Naive thymus-derived CD4-positive, alpha-beta T cell (primary cell): ENCODE measurements at regions of chrX and their contacts with region 1.

Region 1: DNA sequence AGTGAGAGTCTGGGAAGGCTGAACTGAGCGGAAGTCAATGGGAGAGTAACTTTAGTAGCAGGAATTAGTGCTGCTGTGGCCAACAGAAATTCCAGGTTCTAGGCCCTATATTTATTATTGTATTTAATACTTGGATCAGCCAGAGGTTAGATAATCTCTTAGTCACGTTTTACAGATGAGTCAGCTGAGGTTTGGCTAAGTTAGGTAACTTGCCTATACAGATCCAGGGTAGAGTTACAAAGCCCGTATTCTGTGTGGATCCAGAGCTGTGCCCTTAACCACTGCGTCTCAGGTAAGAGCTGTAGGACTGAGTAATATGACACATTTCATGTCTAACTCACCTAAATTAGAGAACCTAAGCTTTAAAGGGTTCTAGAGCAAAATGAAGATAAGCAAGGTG is 20.5 kb downstream of the PSMD10 start:
- DNase-seq: no peak
- ATAC-seq: no peak
- H3K4me3 ChIP-seq: no peak overlapping the region
- H3K4me3 Mint-ChIP-seq: no peak overlapping the region
- H3K27ac ChIP-seq: no peak overlapping the region
- H3K27ac Mint-ChIP-seq: peak overlapping the region in 4 of 9 donors; percentile 22 to 78 (median 36)
- H3K4me1 ChIP-seq: no peaks in the 10 kb centered on the region
- H3K4me1 Mint-ChIP-seq: peaks cover 0 to 11% (median 1%) of the 10 kb centered on the region in 7 donors
- H3K27me3 ChIP-seq: no peaks in the 10 kb centered on the region
- H3K27me3 Mint-ChIP-seq: peaks cover 0 to 7% (median 0%) of the 10 kb centered on the region in 5 donors

Region 2: GRCh38 chrX:106874075-106874474 is 1196.8 kb before region 1 on chrX:
- CTCF ChIA-PET with region 1: no interaction called
- POLR2A ChIA-PET with region 1: no interaction called
- intact Hi-C with region 1: loop called in 1 of 2 experiments (anchors 5 kb)
- DNase-seq: peak in 4 of 9 donors; percentile 14 to 22 (median 21)
- ATAC-seq: no peak
- H3K4me3 ChIP-seq: no peak overlapping the region
- H3K4me3 Mint-ChIP-seq: no peak overlapping the region
- H3K27ac ChIP-seq: no peak overlapping the region
- H3K27ac Mint-ChIP-seq: no peak overlapping the region
- H3K4me1 ChIP-seq: no peaks in the 10 kb centered on the region
- H3K4me1 Mint-ChIP-seq: no peaks in the 10 kb centered on the region
- H3K27me3 ChIP-seq: no peaks in the 10 kb centered on the region
- H3K27me3 Mint-ChIP-seq: peaks cover 0 to 9% (median 3%) of the 10 kb centered on the region in 5 donors

Region 3: GRCh38 chrX:106999002-106999975 is 1071.6 kb before region 1 on chrX:
- CTCF ChIA-PET with region 1: no interaction called
- POLR2A ChIA-PET with region 1: no interaction called
- intact Hi-C with region 1: loop called in 1 of 2 experiments (anchors 10 kb)
- DNase-seq: peak; percentile 6 to 63 (median 49)
- ATAC-seq: peak; percentile 72
- H3K4me3 ChIP-seq: peak overlapping the region; percentile 53
- H3K4me3 Mint-ChIP-seq: peak overlapping the region; percentile 75 to 94 (median 86)
- H3K27ac ChIP-seq: peak overlapping the region; percentile 41
- H3K27ac Mint-ChIP-seq: peak overlapping the region in 8 of 9 donors; percentile 57 to 87 (median 71)
- H3K4me1 ChIP-seq: peaks cover 0 to 5% of the 10 kb centered on the region in 2 donors
- H3K4me1 Mint-ChIP-seq: peaks cover 5 to 13% (median 12%) of the 10 kb centered on the region in 7 donors
- H3K27me3 ChIP-seq: no peaks in the 10 kb centered on the region
- H3K27me3 Mint-ChIP-seq: peaks cover 0 to 2% (median 0%) of the 10 kb centered on the region in 5 donors

Region 4: DNA sequence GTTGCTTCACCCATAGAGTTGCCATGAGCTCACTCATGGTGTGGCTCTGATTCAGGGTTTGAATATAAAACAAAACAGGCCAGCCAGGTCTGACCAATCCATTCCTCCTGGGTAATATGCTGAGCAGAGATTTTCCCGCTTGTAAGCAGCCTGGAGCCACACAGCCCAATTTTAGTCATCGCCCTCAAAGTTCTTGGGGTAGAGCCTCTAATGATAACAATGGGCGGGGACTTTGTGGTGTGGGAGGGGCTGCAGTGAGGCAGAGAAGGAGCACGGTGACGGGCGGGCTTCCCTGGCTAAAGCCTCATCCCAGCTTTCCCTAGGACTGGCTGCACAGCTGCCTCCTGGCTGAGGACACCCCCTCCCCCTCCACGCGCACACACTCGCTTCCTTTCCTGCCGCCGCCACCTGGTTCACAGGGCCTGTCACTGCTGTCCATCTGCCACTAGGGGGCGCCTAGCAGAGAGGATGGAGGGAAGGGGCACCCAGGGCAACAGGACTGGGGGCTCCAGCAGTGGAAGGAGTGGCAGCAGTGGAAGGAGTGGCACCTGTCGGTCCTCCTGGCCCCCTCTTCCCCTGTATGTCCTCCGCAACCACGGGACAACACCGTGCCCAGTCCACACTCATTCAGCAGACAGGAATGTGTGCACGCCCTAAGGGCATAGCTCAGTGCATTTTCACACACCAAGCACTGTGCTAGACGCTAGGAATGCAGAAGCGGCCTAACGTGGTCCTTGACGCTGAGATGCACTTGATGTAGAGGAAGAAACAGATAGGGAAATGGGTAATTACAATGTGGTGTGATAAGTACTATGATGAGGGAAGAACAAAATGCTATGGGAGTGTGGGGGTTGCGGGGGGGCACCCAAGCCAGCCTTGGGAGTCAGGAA is 415.8 kb before region 1 on chrX:
- CTCF ChIA-PET with region 1: interaction called, 3 read pairs
- POLR2A ChIA-PET with region 1: no interaction called
- intact Hi-C with region 1: loop called (anchors 1 to 5 kb)
- DNase-seq: peak; percentile 49 to 76 (median 60)
- ATAC-seq: peak; percentile 94
- H3K4me3 ChIP-seq: no peak overlapping the region
- H3K4me3 Mint-ChIP-seq: no peak overlapping the region
- H3K27ac ChIP-seq: no peak overlapping the region
- H3K27ac Mint-ChIP-seq: peak overlapping the region in 7 of 9 donors; percentile 1 to 89 (median 72)
- H3K4me1 ChIP-seq: peaks cover 0 to 6% of the 10 kb centered on the region in 2 donors
- H3K4me1 Mint-ChIP-seq: peaks cover 6 to 30% (median 18%) of the 10 kb centered on the region in 7 donors
- H3K27me3 ChIP-seq: no peaks in the 10 kb centered on the region
- H3K27me3 Mint-ChIP-seq: no peaks in the 10 kb centered on the region

Region 5: DNA sequence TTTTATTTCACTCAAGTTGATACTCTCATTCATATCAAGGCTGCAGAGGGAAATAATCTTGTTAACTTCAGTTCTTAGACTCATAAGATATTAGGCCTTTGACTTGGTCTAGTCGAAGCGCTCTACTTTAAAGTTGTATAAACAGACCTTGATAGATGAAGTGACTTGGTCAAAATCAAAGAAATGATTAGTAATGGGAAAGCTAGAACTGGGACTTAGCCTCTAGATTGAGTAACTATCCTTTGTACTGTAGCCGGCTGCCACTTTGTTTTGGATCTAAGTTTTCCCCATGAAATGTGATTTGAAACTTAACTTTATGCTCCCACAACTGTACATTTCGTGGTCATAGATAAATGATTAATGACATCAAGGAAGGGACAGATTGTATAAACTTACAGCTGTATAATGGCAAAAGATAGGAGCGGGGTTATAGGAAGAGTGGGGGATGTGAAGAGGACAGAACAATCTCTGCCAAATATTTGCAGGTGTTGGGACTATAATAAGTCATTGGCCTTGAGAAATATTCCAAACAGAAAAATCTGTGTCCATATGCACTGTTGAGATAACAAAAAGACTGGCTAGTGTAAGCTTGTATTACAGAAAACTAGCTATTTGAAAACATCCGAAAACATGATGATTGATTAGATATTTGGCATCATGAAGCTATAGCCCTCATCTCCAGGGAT is 228.0 kb before region 1 on chrX:
- CTCF ChIA-PET with region 1: no interaction called
- POLR2A ChIA-PET with region 1: no interaction called
- intact Hi-C with region 1: loop called in 1 of 2 experiments (anchors 5 kb)
- DNase-seq: no peak
- ATAC-seq: no peak
- H3K4me3 ChIP-seq: no peak overlapping the region
- H3K4me3 Mint-ChIP-seq: no peak overlapping the region
- H3K27ac ChIP-seq: no peak overlapping the region
- H3K27ac Mint-ChIP-seq: no peak overlapping the region
- H3K4me1 ChIP-seq: no peaks in the 10 kb centered on the region
- H3K4me1 Mint-ChIP-seq: peaks cover 0 to 20% (median 7%) of the 10 kb centered on the region in 7 donors
- H3K27me3 ChIP-seq: no peaks in the 10 kb centered on the region
- H3K27me3 Mint-ChIP-seq: no peaks in the 10 kb centered on the region

Region 6: DNA sequence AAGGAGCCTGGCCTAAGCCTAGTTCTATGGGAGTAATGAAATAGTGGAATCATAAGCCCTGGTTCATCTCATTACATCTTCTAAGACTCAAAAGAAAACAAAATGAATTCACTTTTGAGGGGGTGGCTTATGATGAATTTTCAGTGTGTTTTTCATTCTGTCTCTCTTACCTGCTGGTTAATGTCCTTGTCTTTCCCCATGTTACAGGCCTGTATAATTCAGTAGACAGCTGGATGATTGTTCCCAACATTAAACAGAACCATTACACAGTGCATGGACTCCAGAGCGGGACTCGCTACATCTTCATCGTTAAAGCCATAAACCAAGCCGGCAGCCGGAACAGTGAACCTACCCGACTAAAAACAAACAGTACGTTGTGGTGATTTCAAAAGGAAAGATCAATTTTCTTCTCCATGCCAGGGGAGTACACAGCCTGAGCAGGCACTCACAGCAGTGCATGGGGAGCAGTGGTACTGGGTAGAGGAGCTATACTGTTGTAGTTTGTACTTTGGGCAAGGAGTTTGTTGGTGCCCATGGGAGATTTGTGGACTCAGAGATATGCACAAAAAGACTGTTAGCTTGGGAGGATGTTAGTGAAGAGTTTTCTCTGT is 146.7 kb before region 1 on chrX:
- CTCF ChIA-PET with region 1: no interaction called
- POLR2A ChIA-PET with region 1: no interaction called
- intact Hi-C with region 1: loop called in 1 of 2 experiments (anchors 5 kb)
- DNase-seq: no peak
- ATAC-seq: no peak
- H3K4me3 ChIP-seq: no peak overlapping the region
- H3K4me3 Mint-ChIP-seq: no peak overlapping the region
- H3K27ac ChIP-seq: no peak overlapping the region
- H3K27ac Mint-ChIP-seq: no peak overlapping the region
- H3K4me1 ChIP-seq: no peaks in the 10 kb centered on the region
- H3K4me1 Mint-ChIP-seq: peaks cover 0 to 2% (median 0%) of the 10 kb centered on the region in 7 donors
- H3K27me3 ChIP-seq: no peaks in the 10 kb centered on the region
- H3K27me3 Mint-ChIP-seq: no peaks in the 10 kb centered on the region

Region 7: GRCh38 chrX:108020631-108021030 is 50.3 kb before region 1 on chrX:
- CTCF ChIA-PET with region 1: interaction called, 20 read pairs
- POLR2A ChIA-PET with region 1: interaction called, 5 read pairs
- intact Hi-C with region 1: loop called (anchors 1 kb)
- DNase-seq: peak in 7 of 9 donors; percentile 10 to 41 (median 29)
- ATAC-seq: no peak
- H3K4me3 ChIP-seq: peak overlapping the region; percentile 24
- H3K4me3 Mint-ChIP-seq: peak overlapping the region; percentile 73 to 95 (median 88)
- H3K27ac ChIP-seq: peak overlapping the region; percentile 82
- H3K27ac Mint-ChIP-seq: peak overlapping the region in 8 of 9 donors; percentile 88 to 97 (median 96)
- H3K4me1 ChIP-seq: peaks cover 26 to 38% of the 10 kb centered on the region in 2 donors
- H3K4me1 Mint-ChIP-seq: peaks cover 21 to 88% (median 79%) of the 10 kb centered on the region in 7 donors
- H3K27me3 ChIP-seq: no peaks in the 10 kb centered on the region
- H3K27me3 Mint-ChIP-seq: no peaks in the 10 kb centered on the region

Region 8: DNA sequence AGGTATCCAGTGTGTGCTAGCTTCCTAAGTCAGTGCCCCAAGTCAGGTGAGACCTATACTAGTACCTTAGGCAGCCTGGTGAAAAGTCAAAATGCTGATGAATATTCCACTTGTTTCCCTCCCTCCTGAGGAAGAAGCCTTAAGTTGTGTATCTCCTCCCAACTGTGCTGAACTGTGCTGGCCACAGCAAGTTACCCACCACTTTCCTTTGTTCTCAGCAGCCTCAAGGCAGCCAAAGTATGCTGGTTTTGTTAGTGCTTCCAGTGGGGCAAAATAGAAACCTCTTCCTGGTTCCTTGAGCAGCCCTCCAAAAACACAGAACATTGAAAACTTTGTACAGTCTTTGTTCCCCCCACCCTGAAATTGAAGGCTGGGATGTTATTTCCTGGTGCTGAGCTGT is 34.6 kb after region 1 on chrX:
- CTCF ChIA-PET with region 1: no interaction called
- POLR2A ChIA-PET with region 1: no interaction called
- intact Hi-C with region 1: no loop called
- DNase-seq: no peak
- ATAC-seq: no peak
- H3K4me3 ChIP-seq: no peak overlapping the region
- H3K4me3 Mint-ChIP-seq: no peak overlapping the region
- H3K27ac ChIP-seq: no peak overlapping the region
- H3K27ac Mint-ChIP-seq: no peak overlapping the region
- H3K4me1 ChIP-seq: no peaks in the 10 kb centered on the region
- H3K4me1 Mint-ChIP-seq: peaks cover 2 to 10% (median 5%) of the 10 kb centered on the region in 7 donors
- H3K27me3 ChIP-seq: no peaks in the 10 kb centered on the region
- H3K27me3 Mint-ChIP-seq: no peaks in the 10 kb centered on the region

Region 9: DNA sequence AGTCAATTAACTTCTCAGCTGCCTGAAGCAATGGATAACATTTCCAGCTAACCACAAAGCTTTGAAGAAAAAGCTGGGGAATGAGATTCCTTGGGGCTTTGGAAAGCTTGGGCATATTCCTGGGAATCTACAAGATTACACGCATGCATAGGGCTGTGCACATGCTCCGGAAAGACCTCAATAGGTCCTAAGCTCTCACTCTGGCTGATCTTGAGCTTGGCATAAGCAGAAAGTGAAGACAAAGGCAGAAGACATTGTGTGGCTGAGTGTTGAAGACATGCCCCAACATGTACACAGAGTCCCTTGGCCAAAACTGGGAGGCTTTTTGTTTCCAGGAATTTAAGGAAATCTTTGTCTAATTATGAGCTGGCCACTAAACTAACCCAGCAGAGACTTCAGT is 51.9 kb after region 1 on chrX:
- CTCF ChIA-PET with region 1: no interaction called
- POLR2A ChIA-PET with region 1: no interaction called
- intact Hi-C with region 1: no loop called
- DNase-seq: no peak
- ATAC-seq: no peak
- H3K4me3 ChIP-seq: no peak overlapping the region
- H3K4me3 Mint-ChIP-seq: no peak overlapping the region
- H3K27ac ChIP-seq: no peak overlapping the region
- H3K27ac Mint-ChIP-seq: no peak overlapping the region
- H3K4me1 ChIP-seq: no peaks in the 10 kb centered on the region
- H3K4me1 Mint-ChIP-seq: peaks cover 0 to 3% (median 0%) of the 10 kb centered on the region in 7 donors
- H3K27me3 ChIP-seq: no peaks in the 10 kb centered on the region
- H3K27me3 Mint-ChIP-seq: no peaks in the 10 kb centered on the region